Sigmoid colon (tissue), 7 donors: ENCODE measurements at regions of chr19 and their contacts with region 1.

Region 1: GRCh38 chr19:49113762-49114629 is at the start of gene LIN7B:
- DNase-seq: peak; percentile 75
- H3K4me3 ChIP-seq: peak within 1 kb of the TSS; percentile 71 to 87 (median 84)
- H3K27ac ChIP-seq: peak within 1 kb of the TSS; percentile 83 to 91 (median 84)
- H3K4me1 ChIP-seq: peaks cover 0 to 37% (median 24%) of the 10 kb centered on the region in 4 donors
- H3K27me3 ChIP-seq: no peaks in the 10 kb centered on the region
- CTCF ChIP-seq: peak in 2 of 4 experiments; percentile 34 to 62
- EP300 ChIP-seq: no peak
- POLR2A ChIP-seq: no peak
- total RNA-seq, gene LIN7B: 17.4 to 28.8 (median 26.7) TPM

Region 2: GRCh38 chr19:49085020-49085867 is 28.8 kb before region 1 on chr19 and contains the start of gene SNRNP70:
- intact Hi-C with region 1: loop called (anchors 2 kb)
- DNase-seq: peak; percentile 100
- H3K4me3 ChIP-seq: peak within 1 kb of the TSS; percentile 74 to 85 (median 80)
- H3K27ac ChIP-seq: peak within 1 kb of the TSS; percentile 90 to 96 (median 91)
- H3K4me1 ChIP-seq: peaks cover 0 to 34% (median 32%) of the 10 kb centered on the region in 4 donors
- H3K27me3 ChIP-seq: no peaks in the 10 kb centered on the region
- CTCF ChIP-seq: no peak
- EP300 ChIP-seq: peak in 1 of 4 donors; percentile 62
- POLR2A ChIP-seq: peak; percentile 72 to 79
- total RNA-seq, gene SNRNP70: 156 to 382 (median 237) TPM

Region 3: GRCh38 chr19:49142866-49143335 is 28.9 kb after region 1 on chr19:
- intact Hi-C with region 1: loop called (anchors 2 kb)
- DNase-seq: peak; percentile 95
- H3K4me3 ChIP-seq: peak overlapping the region; percentile 27 to 55 (median 46)
- H3K27ac ChIP-seq: peak overlapping the region in 1 of 4 donors; percentile 50
- H3K4me1 ChIP-seq: peaks cover 0 to 25% (median 17%) of the 10 kb centered on the region in 4 donors
- H3K27me3 ChIP-seq: no peaks in the 10 kb centered on the region
- CTCF ChIP-seq: no peak
- EP300 ChIP-seq: no peak
- POLR2A ChIP-seq: no peak

Region 4: DNA sequence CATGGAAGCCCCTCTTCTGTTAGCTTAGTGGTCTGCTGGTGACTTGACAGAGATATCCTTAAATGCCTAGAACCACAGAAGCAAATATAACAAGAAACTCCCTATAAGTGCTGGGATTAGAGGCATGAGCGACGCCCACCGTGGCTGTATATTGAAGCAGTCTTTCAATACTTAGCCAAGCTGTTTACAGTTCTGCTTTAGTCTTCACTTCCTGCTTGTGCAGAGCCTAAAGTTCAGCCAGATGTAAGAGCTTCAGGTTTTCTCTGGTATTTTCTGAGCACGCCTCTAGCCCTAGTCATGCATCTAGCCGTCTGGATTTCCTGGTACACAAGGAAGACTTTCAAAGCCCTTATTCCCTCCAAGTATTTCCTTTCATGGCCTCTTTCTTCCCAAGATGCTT is 72.1 kb after region 1 on chr19:
- intact Hi-C with region 1: no loop called
- DNase-seq: no peak
- H3K4me3 ChIP-seq: no peak overlapping the region
- H3K27ac ChIP-seq: no peak overlapping the region
- H3K4me1 ChIP-seq: no peaks in the 10 kb centered on the region
- H3K27me3 ChIP-seq: no peaks in the 10 kb centered on the region
- CTCF ChIP-seq: no peak
- EP300 ChIP-seq: no peak
- POLR2A ChIP-seq: no peak